AG04449 (cell line): ENCODE measurements at regions of chr15 and their contacts with region 1.

Region 1: GRCh38 chr15:77543159-77543882 is 89.4 kb downstream of the LINGO1 start:
- DNase-seq: peak; percentile 24
- H3K4me3 ChIP-seq: peak overlapping the region; percentile 57
- CTCF ChIP-seq: peak; percentile 86

Region 2: GRCh38 chr15:76939715-76940114 is 603.6 kb before region 1 on chr15:
- CTCF ChIA-PET with region 1: interaction called, 28 read pairs
- POLR2A ChIA-PET with region 1: interaction called, 3 read pairs
- DNase-seq: no peak
- H3K4me3 ChIP-seq: no peak overlapping the region
- CTCF ChIP-seq: no peak

Region 3: DNA sequence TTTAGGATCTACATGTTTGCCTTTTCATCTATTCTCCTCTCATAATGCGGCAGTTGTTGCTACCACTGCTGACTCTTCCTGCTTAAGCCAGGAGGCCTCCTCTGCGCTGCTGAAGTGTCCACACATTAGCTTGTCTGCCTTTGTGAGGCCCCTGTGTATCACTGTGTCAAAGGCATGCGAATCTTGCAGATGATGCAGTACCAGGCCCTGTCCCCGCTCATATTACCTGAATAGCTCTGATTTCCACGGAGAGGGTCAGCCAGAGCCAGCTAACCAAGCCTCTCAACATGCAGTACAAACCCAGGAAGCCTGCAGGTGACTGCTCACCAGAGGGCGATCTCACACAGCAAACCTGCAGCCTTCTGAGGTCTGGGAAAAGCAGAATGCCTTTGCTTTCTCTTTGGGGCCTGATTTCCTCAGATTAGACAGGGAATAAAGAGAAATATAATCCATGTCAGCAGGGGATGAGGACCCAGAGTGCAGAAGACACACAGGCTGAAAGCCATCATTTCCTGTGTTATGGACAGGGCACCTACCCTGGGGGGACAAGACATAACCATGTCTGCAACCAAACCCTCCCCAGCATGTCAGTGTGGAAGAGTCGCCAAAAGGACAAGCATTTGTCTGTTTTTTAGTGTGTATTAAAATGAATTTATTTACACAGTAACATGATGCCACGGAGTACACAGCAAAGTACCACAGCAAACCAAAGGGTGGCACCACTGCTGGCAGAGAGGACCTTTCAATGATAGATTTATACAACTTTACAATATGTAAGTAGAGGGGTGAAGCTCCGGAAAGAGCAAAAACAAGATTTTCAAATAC is 435.6 kb before region 1 on chr15:
- CTCF ChIA-PET with region 1: interaction called, 170 read pairs
- POLR2A ChIA-PET with region 1: no interaction called
- DNase-seq: no peak
- H3K4me3 ChIP-seq: no peak overlapping the region
- CTCF ChIP-seq: peak; percentile 82

Region 4: GRCh38 chr15:77126529-77127326 is 416.6 kb before region 1 on chr15:
- CTCF ChIA-PET with region 1: interaction called, 137 read pairs
- POLR2A ChIA-PET with region 1: no interaction called
- DNase-seq: no peak
- H3K4me3 ChIP-seq: no peak overlapping the region
- CTCF ChIP-seq: no peak

Region 5: DNA sequence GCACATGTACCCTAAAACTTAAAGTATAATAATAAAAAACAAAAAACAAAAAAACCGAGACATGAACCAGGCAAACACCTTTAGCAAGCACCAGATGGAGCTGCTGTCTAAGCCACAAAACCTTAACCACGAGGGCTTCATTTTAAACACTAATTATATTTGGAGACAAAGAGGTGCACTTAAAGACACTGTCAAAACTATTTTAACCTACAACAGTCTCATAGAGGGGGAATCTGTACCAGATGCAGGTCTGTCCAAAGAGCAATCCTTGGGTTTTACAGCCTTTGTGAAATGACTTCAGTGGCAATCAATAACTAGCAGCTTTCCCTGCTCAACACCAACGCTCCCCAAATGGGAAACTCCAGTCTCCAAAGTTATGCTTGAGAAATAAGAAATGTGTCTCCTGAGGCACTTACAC is 356.7 kb before region 1 on chr15:
- CTCF ChIA-PET with region 1: interaction called, 143 read pairs
- POLR2A ChIA-PET with region 1: interaction called, 3 read pairs
- DNase-seq: no peak
- H3K4me3 ChIP-seq: no peak overlapping the region
- CTCF ChIP-seq: peak; percentile 32

Region 6: GRCh38 chr15:77419836-77420609 is 123.3 kb before region 1 on chr15 and contains the start of gene PEAK1:
- CTCF ChIA-PET with region 1: interaction called, 25 read pairs
- POLR2A ChIA-PET with region 1: interaction called, 10 read pairs
- DNase-seq: peak; percentile 91
- H3K4me3 ChIP-seq: peak within 1 kb of the TSS; percentile 83
- CTCF ChIP-seq: no peak

Region 7: DNA sequence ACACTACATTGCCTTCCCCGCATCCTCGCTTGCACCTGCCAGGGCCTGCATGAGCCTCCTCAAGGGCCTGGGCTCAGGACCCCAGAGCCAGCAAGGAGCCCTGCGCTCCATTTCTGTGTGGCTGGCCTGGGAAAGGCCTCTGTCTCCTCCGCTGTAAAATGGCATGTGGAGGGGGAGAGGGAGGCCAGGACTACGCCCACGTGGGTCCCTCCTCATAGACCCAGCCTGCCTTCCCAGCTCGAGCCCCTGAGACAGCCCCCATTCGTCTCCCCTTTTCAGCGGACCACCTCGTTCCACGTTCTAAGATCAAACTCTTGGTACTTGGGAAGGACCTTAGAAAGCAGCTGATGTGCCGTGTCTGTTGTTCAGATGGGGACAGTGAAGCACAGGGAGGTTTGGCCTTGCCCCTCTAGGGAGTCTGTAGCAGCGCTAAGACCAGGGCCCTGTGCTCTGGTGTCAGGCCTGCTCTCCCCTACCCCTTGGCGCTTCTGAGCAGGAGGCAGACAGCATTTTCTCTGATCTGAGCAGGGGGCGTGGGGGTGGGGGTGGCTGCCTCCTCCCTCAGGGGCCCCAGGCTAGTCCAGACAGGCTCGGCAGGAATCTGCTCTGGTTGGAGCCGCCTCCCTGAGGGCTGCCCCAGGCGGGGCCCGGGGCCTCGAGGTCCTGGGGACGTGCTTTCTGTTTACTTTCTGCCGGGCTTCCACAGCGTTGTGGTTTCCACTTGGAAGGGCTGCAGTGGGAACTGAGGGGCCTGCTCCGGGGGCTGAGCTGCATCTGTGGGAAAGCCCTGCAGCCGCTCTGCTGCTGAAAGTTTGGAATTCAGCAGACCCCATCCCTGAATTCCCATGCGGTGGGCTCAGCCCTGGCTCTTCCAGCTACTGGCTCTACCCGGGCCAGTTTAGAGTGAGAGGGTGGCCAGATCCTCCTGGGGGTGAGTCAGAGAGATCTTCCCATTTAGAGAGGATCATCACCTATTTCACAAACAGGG is 16.2 kb before region 1 on chr15:
- CTCF ChIA-PET with region 1: interaction called, 27 read pairs
- POLR2A ChIA-PET with region 1: no interaction called
- DNase-seq: no peak
- H3K4me3 ChIP-seq: no peak overlapping the region
- CTCF ChIP-seq: no peak